Calu3 (cell line): ENCODE measurements at regions of chr5 and their contacts with region 1.

Region 1: DNA sequence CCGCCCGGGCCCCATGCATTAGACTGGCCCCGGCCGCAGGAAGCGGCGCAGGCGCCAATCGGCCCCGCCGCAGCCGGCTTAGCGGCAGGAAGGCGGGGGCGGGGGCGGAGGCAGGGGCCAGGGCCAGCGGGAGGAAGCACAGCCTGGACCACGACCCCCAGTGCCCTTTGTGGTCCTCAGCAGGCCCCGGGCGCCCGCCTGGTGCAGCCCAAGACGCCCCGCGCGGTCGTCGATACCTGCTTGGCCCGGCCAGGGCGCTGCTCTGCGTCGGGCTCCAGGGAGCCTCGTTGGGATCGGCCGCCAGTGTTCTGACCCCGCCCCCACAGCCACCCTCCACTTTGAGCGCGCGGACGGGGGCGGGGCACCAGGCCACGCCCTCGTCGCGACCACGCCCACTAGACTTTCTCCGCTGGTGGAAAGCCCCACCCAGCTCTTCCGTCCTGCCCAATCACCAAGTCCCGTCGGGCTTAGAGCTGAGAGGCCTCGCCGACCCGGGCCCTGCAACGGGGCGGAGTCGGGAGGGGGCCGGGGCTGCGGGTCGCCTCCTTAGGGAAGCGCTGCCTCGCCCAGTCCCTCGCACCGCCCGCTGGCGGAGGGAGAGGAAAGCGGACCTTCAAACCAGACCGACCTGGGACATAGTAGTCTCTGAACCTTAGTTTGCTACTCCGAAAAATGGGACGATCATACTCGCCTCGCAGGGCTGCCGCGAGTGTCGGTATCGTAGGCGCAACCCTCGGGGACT is at the start of gene PDLIM7:
- DNase-seq: peak; percentile 98
- H3K4me3 Mint-ChIP-seq: peak within 1 kb of the TSS; percentile 68
- H3K27ac Mint-ChIP-seq: peak within 1 kb of the TSS; percentile 78
- H3K4me1 Mint-ChIP-seq: peaks cover 32% of the 10 kb centered on the region
- H3K27me3 Mint-ChIP-seq: peaks cover 20% of the 10 kb centered on the region
- CTCF ChIP-seq: peak; percentile 31
- total RNA-seq, gene PDLIM7: 400 and 420 TPM in 2 replicates

Region 2: GRCh38 chr5:177454397-177455035 is 42.9 kb before region 1 on chr5:
- CTCF ChIA-PET with region 1: interaction called, 27 read pairs
- intact Hi-C with region 1: loop called (anchors 2 kb)
- DNase-seq: peak; percentile 99
- H3K4me3 Mint-ChIP-seq: peak overlapping the region; percentile 77
- H3K27ac Mint-ChIP-seq: peak overlapping the region; percentile 86
- H3K4me1 Mint-ChIP-seq: peaks cover 40% of the 10 kb centered on the region
- H3K27me3 Mint-ChIP-seq: no peaks in the 10 kb centered on the region
- CTCF ChIP-seq: peak; percentile 96

Region 3: DNA sequence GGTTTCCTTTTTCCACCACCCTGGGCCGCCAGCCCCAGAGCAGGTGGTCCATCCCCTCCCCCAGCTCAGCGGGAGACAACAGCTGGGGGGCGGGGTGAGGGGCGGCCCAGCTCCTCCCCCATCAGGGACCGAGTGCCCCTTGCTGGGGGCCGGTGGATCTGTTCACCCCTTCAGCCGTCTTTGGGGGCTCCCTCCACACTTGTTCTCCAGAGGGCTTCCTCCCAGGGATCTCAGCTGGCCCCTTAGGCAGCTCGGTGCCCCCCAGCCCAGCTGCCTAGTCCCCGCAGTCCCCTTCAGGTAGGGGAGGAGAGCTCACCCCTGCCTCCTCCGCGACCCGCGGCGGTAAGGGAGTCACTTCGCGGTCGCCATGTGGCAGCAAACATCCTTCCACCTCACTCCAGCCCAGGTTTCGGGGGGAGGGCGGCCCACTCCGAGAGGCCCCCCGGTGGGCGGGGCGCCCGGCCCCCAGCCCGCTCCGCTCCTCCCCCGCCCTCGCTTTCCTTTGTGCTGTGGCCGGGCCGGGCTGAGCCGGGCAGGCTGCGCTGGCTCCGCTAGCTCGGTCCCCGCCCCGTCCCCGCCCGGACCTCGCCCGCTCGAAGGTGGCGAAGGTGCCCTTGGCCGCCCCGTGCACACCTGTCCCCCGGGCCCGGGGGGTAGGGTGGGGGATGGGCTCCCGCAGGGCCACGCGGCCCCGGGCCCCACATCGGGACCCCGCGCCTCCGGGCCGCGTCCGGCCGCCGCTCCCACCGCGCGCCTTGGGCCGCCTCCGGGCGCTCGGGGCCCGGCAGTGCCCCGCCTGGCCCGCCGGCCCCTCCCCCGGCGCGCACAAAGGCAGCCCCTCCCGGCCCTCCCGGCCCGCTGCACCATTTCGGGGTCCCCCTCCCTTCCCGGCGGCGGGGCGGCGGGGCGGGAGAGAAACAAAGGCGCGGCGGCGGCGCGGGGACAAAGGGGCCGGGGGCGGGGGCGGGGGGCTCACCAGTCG is 24.7 kb before region 1 on chr5:
- CTCF ChIA-PET with region 1: interaction called, 11 read pairs
- intact Hi-C with region 1: no loop called
- DNase-seq: peak; percentile 63
- H3K4me3 Mint-ChIP-seq: peak overlapping the region; percentile 76
- H3K27ac Mint-ChIP-seq: peak overlapping the region; percentile 18
- H3K4me1 Mint-ChIP-seq: peaks cover 27% of the 10 kb centered on the region
- H3K27me3 Mint-ChIP-seq: no peaks in the 10 kb centered on the region
- CTCF ChIP-seq: no peak

Region 4: DNA sequence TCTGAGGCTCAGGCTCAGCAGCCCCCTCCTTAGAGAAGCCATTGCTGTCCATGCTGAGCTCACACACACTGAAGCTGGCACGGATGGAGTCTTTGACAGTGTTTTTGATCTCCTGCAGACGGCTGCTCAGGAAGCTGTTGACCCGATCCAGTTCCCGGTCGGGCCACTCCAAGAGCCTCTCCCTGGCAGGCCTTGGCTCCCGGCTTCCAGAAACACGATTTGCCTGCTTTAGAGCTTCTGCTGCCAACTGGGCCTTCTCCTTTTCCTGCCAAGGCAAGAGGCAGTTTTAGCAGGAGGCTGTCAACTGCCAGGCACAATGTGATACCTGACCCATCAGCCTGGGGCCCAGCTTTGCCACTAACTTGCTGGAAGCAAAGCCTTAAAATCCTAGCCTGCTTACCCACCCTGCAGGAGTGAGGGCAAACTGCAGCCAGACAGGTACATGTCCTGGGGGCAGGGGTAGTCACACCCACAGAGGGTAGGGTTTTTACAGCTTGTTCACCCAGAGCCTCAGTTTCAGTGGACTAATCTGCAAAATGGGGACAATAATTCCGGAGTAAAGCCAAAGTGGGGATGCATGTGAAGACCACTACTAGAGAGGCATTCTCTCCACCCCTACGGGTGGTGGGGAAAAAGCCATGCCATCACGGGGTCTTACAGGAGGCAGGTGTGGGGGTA is 27.6 kb after region 1 on chr5:
- CTCF ChIA-PET with region 1: no interaction called
- intact Hi-C with region 1: no loop called
- DNase-seq: no peak
- H3K4me3 Mint-ChIP-seq: no peak overlapping the region
- H3K27ac Mint-ChIP-seq: no peak overlapping the region
- H3K4me1 Mint-ChIP-seq: no peaks in the 10 kb centered on the region
- H3K27me3 Mint-ChIP-seq: no peaks in the 10 kb centered on the region
- CTCF ChIP-seq: no peak